ENCODE measurements at regions of chr13 and their contacts with region 1.

Region 1: DNA sequence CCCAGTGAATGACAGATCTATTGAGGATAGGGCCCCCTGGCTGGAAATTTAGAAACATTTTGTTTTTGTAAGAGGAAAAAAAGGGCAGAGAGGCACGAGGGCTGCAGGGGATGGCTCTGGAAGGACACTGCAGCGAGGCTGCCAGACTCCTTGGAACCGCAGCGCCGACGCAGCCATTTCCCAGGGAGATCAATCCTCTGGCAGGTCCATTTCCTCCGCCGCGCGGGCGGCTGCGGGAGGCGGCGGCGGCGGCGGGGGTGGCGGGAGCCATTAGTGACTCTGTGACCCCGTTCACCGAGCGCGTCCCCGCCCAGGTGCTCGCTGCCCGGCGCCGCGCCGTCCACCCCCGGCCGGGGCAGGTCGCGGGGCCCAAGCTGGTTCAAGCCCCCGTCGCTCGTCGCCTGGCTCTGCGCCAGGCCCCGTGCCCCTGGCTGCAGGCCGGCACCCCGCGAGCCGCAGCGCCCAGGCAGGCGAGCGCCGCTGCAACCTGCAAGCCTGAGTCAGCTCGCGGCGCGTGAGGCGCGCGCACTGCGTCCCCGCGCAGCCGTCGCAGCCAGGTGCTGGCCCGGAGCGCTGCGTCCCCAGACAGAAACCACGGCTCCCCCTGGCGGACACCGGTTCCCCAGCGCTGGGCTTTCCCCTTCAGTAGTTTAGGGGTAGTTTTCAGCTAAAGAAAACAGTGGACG is 192.6 kb downstream of the KATNAL1 start:
- DNase-seq: peak; percentile 84 to 98
- ATAC-seq: peak; percentile 78

Region 2: DNA sequence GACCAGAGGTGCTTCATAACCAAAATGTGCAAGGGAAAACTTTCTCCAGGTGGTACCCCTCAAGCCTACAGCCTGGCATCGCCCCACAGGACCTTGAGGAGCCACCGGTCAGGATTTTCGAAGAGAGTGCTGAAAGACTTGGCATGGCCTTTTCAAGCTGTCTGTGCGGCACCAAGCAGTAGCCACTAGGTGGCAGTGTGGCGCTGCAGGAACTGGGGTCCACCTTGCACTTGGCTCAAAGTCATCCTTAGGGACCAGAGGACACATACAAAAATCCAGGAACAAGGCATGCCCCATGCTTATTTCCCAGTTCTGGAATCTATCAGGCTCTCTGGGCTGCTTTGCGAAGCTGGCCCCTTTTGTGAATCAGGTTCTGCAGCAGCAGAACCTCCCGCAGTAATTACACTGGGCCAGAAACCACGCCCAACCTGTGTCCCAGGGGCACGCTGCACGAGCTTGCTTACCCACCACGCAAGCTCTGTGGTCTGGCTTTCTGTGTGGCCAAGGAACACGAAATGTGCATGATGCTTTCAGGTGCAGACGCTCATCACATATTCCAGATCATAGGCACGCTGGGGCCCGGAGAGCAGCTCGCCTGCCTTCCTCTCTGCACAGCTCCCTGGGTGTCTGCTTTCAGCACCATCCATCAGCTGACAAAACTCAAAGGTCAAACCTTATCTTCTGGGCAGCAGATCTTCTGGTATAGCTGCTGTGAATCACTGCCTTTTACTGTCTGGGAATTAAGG is 606.4 kb before region 1 on chr13:
- intact Hi-C with region 1: loop called in 1 of 2 experiments (anchors 5 kb)
- DNase-seq: peak; percentile 68 to 87
- ATAC-seq: peak; percentile 90

Region 3: GRCh38 chr13:29595380-29596063 is 519.2 kb before region 1 on chr13 and contains the start of gene SLC7A1:
- intact Hi-C with region 1: loop called in 1 of 2 experiments (anchors 10 kb)
- DNase-seq: peak; percentile 79 to 85
- ATAC-seq: peak; percentile 86
- total RNA-seq, gene SLC7A1: 39.9 to 56.9 TPM

Region 4: DNA sequence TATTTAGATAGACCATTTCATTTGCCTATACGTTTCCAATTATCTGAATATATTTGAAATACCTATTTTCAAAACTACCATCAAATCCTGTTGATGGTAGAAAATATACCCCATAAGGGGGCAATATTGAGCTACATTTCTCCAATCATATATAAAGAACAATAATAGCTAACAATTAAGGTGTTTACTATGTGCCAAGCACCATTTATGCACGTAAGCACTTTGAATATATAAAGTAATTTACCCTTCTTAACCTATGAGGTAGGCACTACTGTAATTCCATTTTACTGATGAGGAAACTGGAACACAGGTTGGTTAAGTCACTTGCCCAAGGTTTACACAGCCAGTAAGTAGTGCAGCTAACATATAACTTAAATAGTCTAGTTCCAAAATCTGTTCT is 343.5 kb before region 1 on chr13:
- intact Hi-C with region 1: loop called in 1 of 2 experiments (anchors 5 kb)
- DNase-seq: no peak
- ATAC-seq: peak; percentile 89

Region 5: GRCh38 chr13:29817604-29818378 is 296.9 kb before region 1 on chr13:
- intact Hi-C with region 1: no loop called
- DNase-seq: no peak
- ATAC-seq: no peak

Region 6: GRCh38 chr13:29844441-29844840 is 270.3 kb before region 1 on chr13:
- intact Hi-C with region 1: loop called in 1 of 2 experiments (anchors 5 kb)
- DNase-seq: no peak
- ATAC-seq: no peak

Region 7: DNA sequence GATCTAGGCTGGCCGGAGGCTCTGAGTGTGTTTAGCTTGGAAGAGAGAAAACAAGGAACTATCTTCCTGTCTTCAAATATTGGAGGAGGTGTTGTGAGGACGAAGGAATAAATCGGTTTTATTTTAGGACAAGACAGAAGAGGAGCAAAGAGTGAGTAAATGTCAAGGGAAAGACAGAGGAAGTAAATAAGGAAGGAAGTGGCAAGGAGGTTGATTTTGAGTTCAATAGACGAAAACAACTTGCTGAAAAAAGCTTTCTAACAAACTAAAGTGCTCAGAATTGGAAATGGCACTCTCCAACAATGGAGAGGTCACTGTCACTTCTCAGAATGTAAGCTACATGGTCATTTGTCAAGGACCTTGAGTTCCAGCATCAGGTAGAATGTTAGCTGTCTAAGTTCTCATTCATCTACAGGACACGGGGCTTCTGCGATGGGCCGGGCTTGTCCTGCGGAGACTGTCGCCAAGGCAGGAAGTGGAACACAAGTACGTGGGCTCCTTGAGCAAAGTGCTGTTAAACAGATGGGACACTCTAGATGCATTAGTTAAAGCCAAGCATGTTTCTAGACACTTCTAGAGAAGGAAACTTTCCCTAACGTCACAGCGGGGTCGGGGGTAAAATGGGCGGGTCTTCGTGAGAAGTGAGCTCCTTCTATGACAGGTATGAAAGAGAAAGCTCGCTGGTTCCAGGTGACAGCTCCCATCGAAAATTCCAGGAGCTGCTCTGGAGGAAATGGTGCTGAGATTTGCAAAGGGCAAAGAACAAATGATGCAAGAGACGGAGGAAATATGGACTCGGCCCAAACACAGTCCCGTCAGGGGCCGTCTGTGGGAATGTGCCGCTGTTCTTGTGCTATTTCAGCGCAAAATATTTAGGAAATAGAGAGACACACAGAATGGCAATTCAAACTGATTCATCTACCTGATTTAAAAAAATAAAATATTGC is 160.4 kb before region 1 on chr13:
- intact Hi-C with region 1: no loop called
- DNase-seq: no peak
- ATAC-seq: peak; percentile 76